Heart right ventricle (tissue), 16 donors: ENCODE measurements at regions of chr13 and their contacts with region 1.

Region 1: DNA sequence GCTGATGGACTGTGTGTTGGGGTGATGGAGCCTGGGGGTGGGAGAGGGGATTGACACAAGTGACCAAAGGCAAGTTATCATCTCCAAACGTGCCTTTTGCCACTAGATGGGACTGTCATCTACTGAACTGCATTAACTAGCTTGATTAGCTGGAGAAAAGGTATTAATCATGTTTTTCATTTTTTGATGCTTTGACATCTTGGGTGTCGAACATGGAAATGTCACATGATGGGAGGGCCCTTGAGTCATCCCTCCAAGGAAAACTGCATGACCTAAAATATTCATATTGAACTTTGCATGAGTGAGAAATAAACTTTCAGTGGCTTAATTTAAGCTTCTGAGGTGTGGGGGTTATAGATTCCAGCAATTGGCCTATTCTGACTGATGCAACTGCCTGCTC is 73.2 kb downstream of the ALOX5AP start:
- DNase-seq: no peak
- ATAC-seq: peak in 1 of 8 donors; percentile 9
- H3K4me3 ChIP-seq: no peak overlapping the region
- H3K27ac ChIP-seq: no peak overlapping the region
- H3K4me1 ChIP-seq: peaks cover 0 to 20% (median 13%) of the 10 kb centered on the region in 9 donors
- H3K27me3 ChIP-seq: no peaks in the 10 kb centered on the region
- CTCF ChIP-seq: no peak

Region 2: DNA sequence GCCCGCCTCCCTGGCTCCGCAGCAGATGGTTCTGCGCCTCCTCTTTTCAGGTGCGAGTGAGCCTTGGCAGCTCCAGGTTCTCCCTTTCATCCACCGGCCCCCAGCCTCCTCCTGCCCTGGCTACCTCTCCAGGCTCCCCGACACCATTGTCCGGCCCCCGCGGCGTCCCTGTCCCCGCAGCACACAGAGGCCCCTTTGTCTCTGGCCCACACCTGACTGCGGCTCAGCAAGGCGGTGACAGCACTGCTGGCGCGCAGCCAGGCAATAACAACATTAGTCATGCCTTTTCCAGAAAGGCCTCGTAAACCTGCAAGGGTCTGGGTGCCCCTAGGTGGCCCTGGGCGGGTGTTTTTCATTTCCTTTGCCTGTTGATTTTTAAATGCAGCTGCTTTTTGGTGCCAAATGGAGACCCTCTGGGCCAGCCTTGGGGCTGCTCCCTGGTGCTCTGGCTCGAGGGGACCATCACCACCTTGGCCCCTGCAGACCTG is 24.3 kb after region 1 on chr13:
- intact Hi-C with region 1: no loop called
- DNase-seq: peak in 1 of 2 donors; percentile 44
- ATAC-seq: peak in 5 of 8 donors; percentile 24 to 48 (median 36)
- H3K4me3 ChIP-seq: no peak overlapping the region
- H3K27ac ChIP-seq: no peak overlapping the region
- H3K4me1 ChIP-seq: peaks cover 0 to 5% (median 0%) of the 10 kb centered on the region in 9 donors
- H3K27me3 ChIP-seq: peaks cover 0 to 22% (median 4%) of the 10 kb centered on the region in 7 donors
- CTCF ChIP-seq: no peak

Region 3: DNA sequence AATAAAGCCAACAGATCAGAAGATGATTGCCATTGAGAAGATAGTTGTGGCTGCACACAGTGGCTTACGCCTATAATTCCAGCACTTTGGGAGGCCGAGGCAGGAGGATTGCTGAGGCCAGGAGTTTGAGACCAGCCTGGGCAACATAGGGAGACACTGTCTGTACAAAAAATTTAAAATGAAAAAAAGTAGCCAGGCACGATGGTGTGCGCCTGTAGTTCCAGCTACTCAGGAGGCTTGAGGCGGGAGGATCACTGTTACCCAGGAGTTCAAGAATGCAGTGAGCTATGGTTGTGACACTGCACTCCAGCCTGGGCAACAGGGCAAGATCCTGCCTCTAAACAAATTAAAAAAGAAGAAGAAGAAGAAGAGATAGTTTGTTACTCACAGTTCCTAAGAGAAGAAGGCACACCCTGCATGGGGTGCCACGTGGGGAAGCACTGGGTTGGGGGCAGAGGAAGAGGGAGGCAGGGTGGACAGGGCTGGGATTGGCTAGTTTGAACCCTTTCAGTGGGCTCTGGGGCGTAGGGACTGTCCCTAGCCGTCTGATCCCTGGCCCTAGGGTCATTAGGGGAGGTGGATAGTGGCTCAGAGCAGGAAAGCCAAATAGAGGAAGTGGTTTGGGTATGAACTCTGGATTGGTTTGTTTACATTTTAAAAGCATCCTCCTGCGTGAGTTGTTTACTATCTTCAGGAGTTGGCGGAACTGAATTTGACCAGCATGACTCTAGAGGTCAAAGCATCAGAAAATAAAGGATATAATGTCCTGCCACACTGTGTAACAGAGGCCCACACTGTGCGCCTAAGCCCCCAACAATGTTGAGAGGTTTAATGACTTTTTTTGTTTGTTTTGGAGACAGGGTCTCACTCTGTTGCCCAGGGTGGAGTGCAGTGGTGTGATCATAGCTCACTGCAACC is 37.0 kb after region 1 on chr13:
- intact Hi-C with region 1: loop called in 1 of 10 experiments (anchors 2 kb)
- DNase-seq: no peak
- ATAC-seq: no peak
- H3K4me3 ChIP-seq: no peak overlapping the region
- H3K27ac ChIP-seq: peak overlapping the region in 1 of 10 donors; percentile 65
- H3K4me1 ChIP-seq: peaks cover 0 to 32% (median 0%) of the 10 kb centered on the region in 9 donors
- H3K27me3 ChIP-seq: no peaks in the 10 kb centered on the region
- CTCF ChIP-seq: no peak